ENCODE measurements at regions of chr9 and their contacts with region 1.

Region 1: DNA sequence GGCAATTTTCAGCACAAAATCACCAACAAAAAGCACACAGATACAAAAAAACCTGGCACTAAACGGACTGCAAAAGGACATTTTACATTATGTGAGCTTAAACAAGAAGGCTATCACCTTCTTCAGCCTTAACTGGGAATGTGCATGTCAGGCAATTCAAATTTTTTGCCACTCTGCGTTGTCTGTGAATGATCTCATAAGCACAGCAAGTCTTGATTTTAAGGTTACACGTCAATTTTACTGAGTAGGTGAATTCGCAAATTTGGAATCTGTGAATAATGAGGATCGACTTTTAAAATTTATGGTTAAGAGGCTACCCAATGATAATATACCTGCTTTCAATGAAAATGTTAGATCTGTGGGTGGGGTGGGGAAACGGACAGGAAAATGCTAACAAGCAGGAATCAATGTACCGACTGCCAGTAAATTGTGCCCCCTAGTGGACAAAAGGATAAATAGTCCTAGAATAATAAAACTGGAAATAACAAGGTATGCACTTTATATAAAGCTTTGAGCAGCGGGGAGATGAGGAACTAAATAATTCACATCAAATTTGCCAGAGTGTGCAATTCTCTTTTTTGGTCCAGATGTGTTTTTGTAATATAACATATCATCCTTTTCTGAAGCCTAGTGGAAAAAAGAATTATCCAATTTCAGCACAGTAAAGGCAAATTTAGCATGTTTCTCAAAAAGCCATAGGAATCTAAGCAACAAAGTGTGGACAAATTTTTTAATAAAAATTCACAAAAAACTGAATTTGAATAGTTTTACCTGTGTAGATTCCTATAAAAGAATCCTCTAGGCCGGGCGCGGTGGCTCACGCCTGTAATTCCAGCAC is 20.5 kb downstream of the EQTN start:
- DNase-seq: peak in 3 of 5 donors; percentile 12 to 82 (median 75)
- H3K4me3 ChIP-seq: peak overlapping the region in 2 of 3 donors; percentile 6 to 45
- H3K27ac ChIP-seq: no peak overlapping the region
- H3K4me1 ChIP-seq: peaks cover 0 to 7% (median 7%) of the 10 kb centered on the region in 3 donors
- H3K27me3 ChIP-seq: no peaks in the 10 kb centered on the region
- CTCF ChIP-seq: peak; percentile 75

Region 2: DNA sequence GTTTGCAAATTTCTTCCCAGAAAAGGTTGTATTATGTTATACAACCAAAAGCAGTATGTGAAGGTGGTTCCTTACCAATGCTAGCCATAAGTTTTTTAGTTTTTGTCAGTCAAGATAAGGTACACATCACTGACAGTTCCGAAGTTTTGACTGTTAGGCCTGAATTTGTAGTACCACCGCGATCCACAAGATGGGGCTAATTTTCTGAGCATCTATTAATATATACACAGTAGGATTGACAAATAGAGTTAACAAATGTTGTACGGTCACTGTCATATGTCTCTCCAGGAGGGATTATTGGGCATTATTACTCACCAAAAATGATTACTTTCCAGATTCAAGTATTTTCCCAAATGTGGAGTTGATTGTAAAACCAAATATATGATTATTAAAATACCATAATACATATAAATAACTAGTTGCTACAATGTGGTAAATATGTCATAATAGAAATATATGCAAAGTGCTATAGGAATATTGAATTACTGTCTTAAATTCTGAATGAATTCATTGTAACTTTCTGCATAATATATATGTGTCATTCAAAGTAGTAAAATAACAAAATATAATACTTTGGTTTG is 242.5 kb before region 1 on chr9:
- intact Hi-C with region 1: loop called (anchors 10 kb)
- DNase-seq: peak in 4 of 5 donors; percentile 45 to 55 (median 54)
- H3K4me3 ChIP-seq: no peak overlapping the region
- H3K27ac ChIP-seq: no peak overlapping the region
- H3K4me1 ChIP-seq: no peaks in the 10 kb centered on the region
- H3K27me3 ChIP-seq: no peaks in the 10 kb centered on the region
- CTCF ChIP-seq: peak; percentile 57

Region 3: GRCh38 chr9:27194401-27195091 is 81.9 kb before region 1 on chr9:
- intact Hi-C with region 1: no loop called
- DNase-seq: no peak
- H3K4me3 ChIP-seq: no peak overlapping the region
- H3K27ac ChIP-seq: no peak overlapping the region
- H3K4me1 ChIP-seq: no peaks in the 10 kb centered on the region
- H3K27me3 ChIP-seq: no peaks in the 10 kb centered on the region
- CTCF ChIP-seq: no peak

Region 4: GRCh38 chr9:27340961-27341511 is 64.6 kb after region 1 on chr9:
- intact Hi-C with region 1: no loop called
- DNase-seq: peak in 4 of 5 donors; percentile 83 to 94 (median 88)
- H3K4me3 ChIP-seq: no peak overlapping the region
- H3K27ac ChIP-seq: peak overlapping the region; percentile 10 to 61
- H3K4me1 ChIP-seq: peaks cover 7 to 28% (median 17%) of the 10 kb centered on the region in 3 donors
- H3K27me3 ChIP-seq: no peaks in the 10 kb centered on the region
- CTCF ChIP-seq: no peak

Region 5: DNA sequence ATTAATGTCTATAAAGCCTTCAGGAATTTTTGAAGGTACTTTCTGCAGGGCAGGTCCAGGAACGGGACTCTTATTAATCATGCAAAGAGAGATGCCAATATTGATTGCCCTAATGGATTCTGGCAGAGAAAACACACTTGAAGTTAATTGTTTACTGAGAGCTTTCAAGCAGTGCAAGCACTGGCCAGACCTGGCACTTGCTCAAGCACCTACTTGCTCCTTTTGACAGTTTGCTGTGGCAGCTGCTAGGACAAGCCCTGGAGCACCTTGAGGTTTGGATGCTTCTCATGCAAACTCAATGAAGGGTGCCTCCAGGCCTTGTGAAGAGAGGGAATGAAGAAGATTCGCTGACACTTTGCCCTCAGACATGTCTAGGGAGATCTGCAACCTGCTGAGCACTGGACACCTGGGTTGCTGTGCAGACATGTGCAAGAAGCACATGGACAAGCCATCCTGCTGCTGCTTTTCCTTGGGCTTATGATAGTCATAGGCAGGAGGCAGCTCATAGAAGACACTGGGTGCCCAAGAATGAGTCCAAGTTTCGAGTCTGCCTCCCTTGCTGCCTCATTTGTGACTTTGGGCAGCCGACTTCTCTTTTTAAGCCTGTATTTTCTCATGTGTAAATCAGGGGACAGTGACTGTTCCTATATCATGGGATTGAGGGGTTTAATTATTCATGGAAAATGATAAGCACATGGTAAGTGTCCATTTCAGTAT is 109.4 kb after region 1 on chr9:
- intact Hi-C with region 1: no loop called
- DNase-seq: peak in 2 of 5 donors; percentile 58 to 62
- H3K4me3 ChIP-seq: no peak overlapping the region
- H3K27ac ChIP-seq: no peak overlapping the region
- H3K4me1 ChIP-seq: peaks cover 9 to 32% (median 12%) of the 10 kb centered on the region in 3 donors
- H3K27me3 ChIP-seq: no peaks in the 10 kb centered on the region
- CTCF ChIP-seq: no peak

Region 6: DNA sequence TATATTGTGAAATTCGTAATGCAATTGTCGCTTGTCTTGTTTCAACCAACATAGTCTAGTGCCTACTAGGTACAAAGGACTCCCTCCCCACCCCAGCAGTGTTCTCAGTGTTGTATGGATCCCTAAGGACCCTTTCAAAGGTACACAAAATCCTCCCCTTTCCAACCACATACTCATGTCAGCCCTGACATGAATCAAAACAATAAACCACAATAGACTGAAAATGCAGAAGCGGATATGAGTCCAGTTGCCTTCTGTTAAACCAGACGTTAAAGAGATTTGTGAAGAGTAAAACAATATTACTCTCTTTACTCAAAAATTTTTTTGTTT is 165.3 kb after region 1 on chr9:
- intact Hi-C with region 1: no loop called
- DNase-seq: no peak
- H3K4me3 ChIP-seq: no peak overlapping the region
- H3K27ac ChIP-seq: no peak overlapping the region
- H3K4me1 ChIP-seq: no peaks in the 10 kb centered on the region
- H3K27me3 ChIP-seq: no peaks in the 10 kb centered on the region
- CTCF ChIP-seq: no peak

Measured in kidney (tissue), 22 donors.